HepG2 (cell line): ENCODE measurements at regions of chr14 and their contacts with region 1.

Region 1: GRCh38 chr14:24058260-24058950 is 6.6 kb downstream of the CARMIL3 start:
- DNase-seq: peak; percentile 89
- ATAC-seq: peak; percentile 84
- H3K4me3 ChIP-seq: no peak overlapping the region
- H3K27ac ChIP-seq: no peak overlapping the region
- H3K4me1 ChIP-seq: peaks cover 40% of the 10 kb centered on the region
- H3K27me3 ChIP-seq: peaks cover 19 to 48% of the 10 kb centered on the region in 2 experiments; a peak in 4 of 5 replicates
- CTCF ChIP-seq: peak; percentile 99
- EP300 ChIP-seq: no peak
- POLR2A ChIP-seq: no peak
- RAD21 ChIP-seq: peak; percentile 99

Region 2: DNA sequence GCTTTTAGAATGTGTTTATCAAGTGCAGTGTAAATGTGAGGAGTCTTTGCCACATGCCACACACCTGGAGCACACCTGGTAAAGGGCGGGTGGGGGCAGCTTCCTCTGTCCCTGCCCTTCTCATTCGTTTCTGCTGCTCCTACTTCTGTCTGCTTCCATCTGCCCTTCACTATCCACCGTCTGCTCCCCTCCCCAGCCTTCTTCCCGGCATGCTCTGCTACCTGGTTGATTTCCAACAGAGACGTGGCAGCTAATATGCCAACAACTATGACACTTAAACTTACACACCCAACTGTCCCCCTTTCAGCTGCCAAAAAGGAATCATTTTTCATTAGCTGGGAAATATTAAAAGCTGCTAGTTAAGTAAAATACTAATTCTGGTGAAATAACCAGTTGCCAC is 15.7 kb before region 1 on chr14:
- CTCF ChIA-PET with region 1: no interaction called
- POLR2A ChIA-PET with region 1: no interaction called
- in situ Hi-C with region 1: no loop called
- intact Hi-C with region 1: no loop called
- DNase-seq: no peak
- ATAC-seq: no peak
- H3K4me3 ChIP-seq: no peak overlapping the region
- H3K27ac ChIP-seq: no peak overlapping the region
- H3K4me1 ChIP-seq: 0 out of 2 replicates have a peak, but pooled peaks cover 4% of the 10 kb centered on the region
- H3K27me3 ChIP-seq: peaks cover 0 to 12% of the 10 kb centered on the region in 2 experiments; a peak in 3 of 5 replicates
- CTCF ChIP-seq: no peak
- EP300 ChIP-seq: no peak
- POLR2A ChIP-seq: no peak
- RAD21 ChIP-seq: no peak

Region 3: DNA sequence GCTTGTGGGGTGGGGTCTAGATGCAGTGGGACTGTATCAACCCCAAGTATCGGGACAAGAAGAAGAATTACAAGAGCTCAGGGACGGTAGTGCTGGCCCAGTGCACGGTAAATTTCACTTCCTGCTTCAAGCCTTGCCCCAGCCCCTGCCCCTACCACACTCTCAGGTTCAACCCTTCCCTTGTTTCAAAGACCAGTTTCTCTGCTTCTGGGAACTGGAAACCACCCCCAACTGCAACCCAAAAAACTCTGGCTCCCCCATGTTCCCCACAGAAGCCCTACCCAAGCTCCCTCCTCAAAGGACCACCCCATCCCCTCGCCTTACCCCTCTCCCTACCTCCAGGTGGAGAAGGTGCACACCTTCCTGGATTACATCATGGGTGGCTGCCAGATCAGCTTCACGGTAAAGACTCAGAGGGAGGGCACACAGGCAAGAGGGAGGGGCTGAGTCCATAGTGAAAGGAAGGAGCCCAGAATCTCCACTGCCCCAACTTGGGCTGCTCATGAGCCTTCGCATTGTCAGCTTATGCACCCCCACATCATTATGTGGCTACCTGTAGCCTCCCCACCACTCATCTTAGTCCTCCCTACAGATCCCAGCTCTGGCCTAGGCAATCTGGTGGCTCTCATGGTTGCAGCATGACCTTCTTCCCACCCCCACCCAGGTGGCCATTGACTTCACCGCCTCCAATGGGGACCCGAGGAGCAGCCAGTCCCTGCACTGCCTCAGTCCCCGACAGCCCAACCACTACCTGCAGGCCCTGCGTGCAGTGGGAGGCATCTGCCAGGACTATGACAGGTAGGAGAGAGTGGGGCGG is 17.3 kb after region 1 on chr14:
- CTCF ChIA-PET with region 1: interaction called, 3 read pairs
- POLR2A ChIA-PET with region 1: interaction called, 20 read pairs
- in situ Hi-C with region 1: no loop called
- intact Hi-C with region 1: no loop called
- DNase-seq: no peak
- ATAC-seq: peak; percentile 1; the same call in 1 of the 3 replicates
- H3K4me3 ChIP-seq: no peak overlapping the region
- H3K27ac ChIP-seq: no peak overlapping the region
- H3K4me1 ChIP-seq: peaks cover 33% of the 10 kb centered on the region
- H3K27me3 ChIP-seq: peaks cover 15 to 66% of the 10 kb centered on the region in 2 experiments
- CTCF ChIP-seq: no peak
- EP300 ChIP-seq: no peak
- POLR2A ChIP-seq: no peak
- RAD21 ChIP-seq: no peak

Region 4: GRCh38 chr14:24086193-24086955 is 28.0 kb after region 1 on chr14:
- CTCF ChIA-PET with region 1: interaction called, 109 read pairs
- POLR2A ChIA-PET with region 1: interaction called, 226 read pairs
- in situ Hi-C with region 1: loop called (anchors 5 kb)
- intact Hi-C with region 1: loop called (anchors 1 kb)
- DNase-seq: no peak
- ATAC-seq: no peak
- H3K4me3 ChIP-seq: no peak overlapping the region
- H3K27ac ChIP-seq: no peak overlapping the region
- H3K4me1 ChIP-seq: peaks cover 39% of the 10 kb centered on the region
- H3K27me3 ChIP-seq: peaks cover 10 to 45% of the 10 kb centered on the region in 2 experiments
- CTCF ChIP-seq: no peak
- EP300 ChIP-seq: no peak
- POLR2A ChIP-seq: no peak
- RAD21 ChIP-seq: no peak

Region 5: DNA sequence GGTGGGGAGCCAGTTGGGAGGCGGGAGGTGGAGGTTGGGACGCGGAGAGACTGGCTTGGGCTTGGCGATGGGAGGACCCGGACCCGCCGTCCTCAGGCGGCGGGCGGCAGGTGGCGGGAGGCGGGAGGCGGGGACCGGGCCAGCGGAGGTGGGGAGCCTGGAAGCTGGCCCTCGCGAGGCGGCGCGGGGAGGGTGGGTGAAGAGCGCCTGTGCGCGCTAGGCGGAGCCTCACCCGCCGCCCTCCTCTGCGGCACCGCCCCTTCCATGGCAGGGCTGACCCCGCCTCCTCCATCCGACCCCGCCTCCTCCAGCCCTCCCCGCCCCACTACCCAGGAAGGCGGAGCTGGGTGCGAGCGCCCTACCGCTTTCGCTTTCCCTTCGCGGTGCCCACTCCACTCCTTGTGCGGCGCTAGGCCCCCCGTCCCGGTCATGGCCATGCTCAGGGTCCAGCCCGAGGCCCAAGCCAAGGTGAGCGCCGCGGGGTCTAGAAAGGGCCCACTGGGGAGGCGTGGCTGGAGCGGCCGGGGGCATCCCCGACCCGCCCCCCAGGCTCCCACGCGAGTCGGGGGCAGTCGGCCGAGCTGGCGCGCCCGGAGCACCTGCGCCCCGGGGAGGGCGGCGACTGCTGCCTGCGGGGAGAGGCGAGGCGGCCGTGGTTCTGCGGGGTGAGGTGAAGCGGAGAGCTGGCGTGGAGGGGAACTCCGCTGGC is 77.6 kb after region 1 on chr14 and contains the start of gene PSME1:
- CTCF ChIA-PET with region 1: no interaction called
- POLR2A ChIA-PET with region 1: interaction called, 11 read pairs
- in situ Hi-C with region 1: no loop called
- intact Hi-C with region 1: no loop called
- DNase-seq: peak; percentile 93
- ATAC-seq: peak; percentile 86
- H3K4me3 ChIP-seq: peak within 1 kb of the TSS; percentile 91 to 98 (median 93)
- H3K27ac ChIP-seq: peak within 1 kb of the TSS; percentile 75
- H3K4me1 ChIP-seq: peaks cover 64% of the 10 kb centered on the region
- H3K27me3 ChIP-seq: no peaks in the 10 kb centered on the region; a peak in 1 of 5 replicates
- CTCF ChIP-seq: peak; percentile 47; the same call in 1 of the 2 replicates
- EP300 ChIP-seq: peak; percentile 23 to 43; a peak in 1 of 4 replicates
- POLR2A ChIP-seq: peak in 1 of 2 experiments; percentile 31; a peak in 1 of 4 replicates
- RAD21 ChIP-seq: peak; percentile 71
- total RNA-seq, gene PSME1: 608 and 713 TPM in 2 replicates